Endothelial cell of umbilical vein (primary cell): ENCODE measurements at regions of chr3 and their contacts with region 1.

Region 1: DNA sequence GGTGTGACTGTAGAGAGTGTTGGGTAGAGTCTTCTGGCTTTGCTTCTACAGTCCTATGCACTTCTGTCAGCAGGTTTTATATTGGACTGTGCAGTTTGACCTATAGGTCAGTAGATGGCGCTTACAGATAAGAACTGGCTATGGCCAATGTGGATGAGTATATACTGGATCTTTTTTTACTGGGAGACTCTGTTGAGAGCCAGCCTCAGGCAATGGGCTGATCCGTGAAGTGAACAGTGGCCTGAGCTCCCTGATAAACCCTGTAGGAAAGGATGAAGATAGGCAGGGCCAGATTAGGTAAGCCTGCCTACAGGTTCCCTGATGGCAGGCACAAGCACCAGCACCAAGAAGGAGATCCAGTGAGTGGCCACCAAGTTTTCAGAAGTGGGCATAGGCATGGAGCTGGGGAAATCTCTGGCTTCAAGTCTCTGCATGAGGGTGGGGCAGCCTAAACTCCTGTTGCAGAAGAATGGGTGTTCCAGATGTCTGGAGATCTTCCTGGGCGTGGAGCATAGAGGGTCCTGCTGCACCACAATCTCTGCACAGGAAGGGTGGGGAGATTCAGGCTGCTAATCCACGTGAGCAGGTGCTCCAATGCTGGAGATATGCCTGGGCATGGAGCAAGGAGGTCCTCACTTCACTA is 326.0 kb upstream of the SGO1 start:
- DNase-seq: peak; percentile 51
- H3K4me3 ChIP-seq: no peak overlapping the region
- H3K27ac ChIP-seq: no peak overlapping the region
- H3K4me1 ChIP-seq: no peaks in the 10 kb centered on the region
- H3K27me3 ChIP-seq: no peaks in the 10 kb centered on the region
- CTCF ChIP-seq: peak; percentile 35 to 40
- POLR2A ChIP-seq: no peak

Region 2: DNA sequence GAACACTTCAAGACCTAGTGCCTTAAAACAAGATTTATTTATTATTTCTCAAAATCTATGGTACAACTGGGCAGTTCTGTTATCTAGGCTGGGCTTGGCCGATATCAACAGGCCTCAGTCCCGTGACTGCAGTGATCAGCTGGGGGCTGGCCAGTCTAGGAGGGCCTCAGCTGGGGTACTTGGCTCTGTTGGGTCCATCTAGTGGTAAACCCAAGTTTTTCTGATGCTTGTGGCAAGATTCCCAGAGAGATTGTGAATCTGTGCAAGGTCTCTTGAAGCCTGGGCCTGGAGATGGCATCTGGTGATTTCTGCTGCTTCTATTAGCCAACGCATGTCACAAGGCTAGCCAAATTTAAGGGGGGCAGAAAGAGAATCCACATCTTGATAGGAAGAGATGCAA is 156.4 kb after region 1 on chr3:
- CTCF ChIA-PET with region 1: no interaction called
- POLR2A ChIA-PET with region 1: no interaction called
- dilution Hi-C with region 1: no loop called
- intact Hi-C with region 1: loop called (anchors 1 kb)
- DNase-seq: peak; percentile 45
- H3K4me3 ChIP-seq: no peak overlapping the region
- H3K27ac ChIP-seq: no peak overlapping the region
- H3K4me1 ChIP-seq: no peaks in the 10 kb centered on the region
- H3K27me3 ChIP-seq: no peaks in the 10 kb centered on the region
- CTCF ChIP-seq: peak in 1 of 2 donors; percentile 26
- POLR2A ChIP-seq: no peak

Region 3: DNA sequence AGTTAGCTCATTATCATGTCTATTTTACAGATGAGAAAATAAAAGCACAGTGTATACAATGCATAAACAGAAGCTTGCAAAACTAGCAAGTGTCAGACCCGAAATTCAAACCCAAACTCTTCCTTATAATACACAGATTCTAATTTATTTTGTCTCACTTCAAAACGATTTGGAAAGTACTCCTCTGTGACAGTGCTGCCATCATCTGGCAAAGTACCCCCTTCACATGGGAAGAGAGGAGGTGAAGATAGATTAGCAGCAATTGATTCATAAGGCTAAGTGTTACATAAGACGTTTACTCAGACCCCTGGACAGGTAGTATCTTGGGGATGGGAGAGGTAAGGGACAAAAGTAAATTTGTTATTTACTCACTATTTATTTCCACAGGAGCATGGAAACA is 418.1 kb after region 1 on chr3:
- CTCF ChIA-PET with region 1: no interaction called
- POLR2A ChIA-PET with region 1: no interaction called
- dilution Hi-C with region 1: no loop called
- intact Hi-C with region 1: loop called (anchors 2 kb)
- DNase-seq: peak; percentile 5
- H3K4me3 ChIP-seq: no peak overlapping the region
- H3K27ac ChIP-seq: no peak overlapping the region
- H3K4me1 ChIP-seq: no peaks in the 10 kb centered on the region
- H3K27me3 ChIP-seq: no peaks in the 10 kb centered on the region
- CTCF ChIP-seq: no peak
- POLR2A ChIP-seq: no peak

Region 4: DNA sequence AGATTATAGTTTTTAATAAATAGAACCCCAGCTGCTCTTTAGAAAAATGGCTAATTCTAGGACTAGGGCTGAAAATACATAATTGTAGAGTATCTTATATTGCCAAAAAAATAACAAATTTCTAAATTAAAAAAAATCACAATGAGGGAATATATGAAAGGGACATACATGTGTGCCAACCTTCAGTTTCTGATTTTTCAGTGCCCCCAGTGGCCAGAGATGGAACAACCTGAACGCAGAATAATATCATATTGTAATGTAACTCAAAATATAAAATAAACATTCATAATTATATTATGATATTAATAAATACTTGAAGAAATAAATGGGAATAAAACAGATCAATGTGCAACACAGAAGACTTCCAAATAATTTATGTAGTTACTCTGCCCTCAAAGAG is 778.6 kb after region 1 on chr3:
- CTCF ChIA-PET with region 1: no interaction called
- POLR2A ChIA-PET with region 1: no interaction called
- dilution Hi-C with region 1: no loop called
- intact Hi-C with region 1: loop called (anchors 5 kb)
- DNase-seq: no peak
- H3K4me3 ChIP-seq: no peak overlapping the region
- H3K27ac ChIP-seq: no peak overlapping the region
- H3K4me1 ChIP-seq: no peaks in the 10 kb centered on the region
- H3K27me3 ChIP-seq: no peaks in the 10 kb centered on the region
- CTCF ChIP-seq: peak; percentile 23 to 34
- POLR2A ChIP-seq: no peak

Region 5: DNA sequence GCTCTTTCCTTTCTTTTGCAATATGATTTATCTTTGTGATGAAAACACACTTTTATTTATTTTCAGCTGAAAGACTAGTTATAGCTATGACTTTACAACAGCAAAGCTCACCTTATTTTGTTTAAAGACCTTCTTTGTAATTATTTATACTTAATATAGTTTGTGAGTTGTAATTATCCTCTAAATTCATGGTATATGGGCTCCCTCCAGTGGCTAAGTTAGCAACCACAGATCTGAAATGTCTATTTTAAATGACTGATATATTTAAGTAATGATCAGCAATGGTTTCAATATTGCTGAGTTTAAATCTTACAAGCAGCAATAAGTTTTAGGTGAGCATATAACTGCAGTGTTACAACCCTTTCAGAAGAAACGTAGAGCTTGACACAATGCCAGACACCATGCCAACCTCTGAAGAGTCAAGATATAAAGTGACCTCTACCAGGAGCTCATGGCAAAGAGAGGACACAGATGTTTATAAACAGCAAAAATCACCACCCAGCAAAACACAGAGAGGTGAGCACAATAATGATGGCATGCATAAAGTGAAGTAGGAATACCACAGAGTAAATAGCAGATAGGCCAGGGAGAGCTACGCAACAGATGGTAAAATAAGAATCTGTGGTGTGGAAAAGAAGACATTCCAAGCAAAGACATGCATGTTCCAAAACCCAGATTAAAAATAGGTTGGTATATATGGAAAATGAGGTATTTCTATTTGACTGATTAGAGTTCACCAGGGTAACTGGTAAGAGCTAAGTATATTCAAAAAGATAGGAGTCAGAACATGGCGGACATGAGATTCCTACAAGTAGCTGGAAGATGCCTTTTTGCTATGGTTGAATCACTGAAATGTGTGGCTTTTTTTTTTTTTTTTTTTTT is 1382.7 kb after region 1 on chr3:
- CTCF ChIA-PET with region 1: interaction called, 24 read pairs
- POLR2A ChIA-PET with region 1: no interaction called
- dilution Hi-C with region 1: no loop called
- intact Hi-C with region 1: loop called (anchors 5 kb)
- DNase-seq: peak; percentile 17
- H3K4me3 ChIP-seq: no peak overlapping the region
- H3K27ac ChIP-seq: no peak overlapping the region
- H3K4me1 ChIP-seq: no peaks in the 10 kb centered on the region
- H3K27me3 ChIP-seq: no peaks in the 10 kb centered on the region
- CTCF ChIP-seq: peak in 1 of 2 donors; percentile 10
- POLR2A ChIP-seq: no peak